ENCODE measurements at regions of chr9 and their contacts with region 1.

Region 1: GRCh38 chr9:96555567-96556386 is 63.9 kb downstream of the CDC14B start:
- DNase-seq: no peak

Region 2: GRCh38 chr9:96061293-96061987 is 494.3 kb before region 1 on chr9:
- intact Hi-C with region 1: no loop called
- DNase-seq: no peak

Region 3: GRCh38 chr9:96279960-96280359 is 275.8 kb before region 1 on chr9:
- intact Hi-C with region 1: no loop called
- DNase-seq: no peak

Region 4: DNA sequence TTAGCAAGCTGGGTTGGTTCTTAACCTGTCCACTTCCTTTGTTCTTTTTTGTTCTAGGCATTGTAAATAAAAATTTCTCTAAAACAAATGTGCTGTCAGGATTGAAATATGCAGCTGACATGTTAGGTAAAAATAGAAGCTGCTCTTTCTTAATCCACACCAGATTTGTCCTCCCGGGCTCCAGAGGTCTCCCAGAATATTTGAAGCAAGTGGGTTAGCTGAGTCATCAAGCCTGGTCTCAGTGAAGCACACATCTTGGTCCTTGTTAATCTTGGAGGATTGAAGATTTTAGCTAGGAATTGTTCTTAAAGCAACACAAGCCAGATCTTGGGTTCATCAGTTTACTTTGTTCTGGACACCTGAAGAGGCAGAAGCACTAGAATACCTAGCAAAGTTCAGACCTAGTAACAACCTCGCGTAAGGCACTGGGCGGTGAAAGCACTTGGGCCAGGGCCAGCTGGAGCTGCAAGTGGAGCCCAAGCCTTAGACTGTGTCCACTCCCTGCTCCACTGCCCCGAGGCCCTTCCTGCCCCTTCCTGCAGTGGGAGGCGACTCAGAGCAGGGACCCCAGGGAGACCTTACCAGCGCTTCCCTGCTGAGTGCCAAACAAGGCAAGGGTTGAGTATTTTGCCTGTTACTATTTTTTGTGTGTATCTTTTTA is 69.3 kb before region 1 on chr9:
- intact Hi-C with region 1: loop called (anchors 5 kb)
- DNase-seq: peak; percentile 86